Activated naive CD4-positive, alpha-beta T cell treated with anti-CD3 and anti-CD28 coated beads for 36 hours (primary cell): ENCODE measurements at regions of chr1 and their contacts with region 1.

Region 1: DNA sequence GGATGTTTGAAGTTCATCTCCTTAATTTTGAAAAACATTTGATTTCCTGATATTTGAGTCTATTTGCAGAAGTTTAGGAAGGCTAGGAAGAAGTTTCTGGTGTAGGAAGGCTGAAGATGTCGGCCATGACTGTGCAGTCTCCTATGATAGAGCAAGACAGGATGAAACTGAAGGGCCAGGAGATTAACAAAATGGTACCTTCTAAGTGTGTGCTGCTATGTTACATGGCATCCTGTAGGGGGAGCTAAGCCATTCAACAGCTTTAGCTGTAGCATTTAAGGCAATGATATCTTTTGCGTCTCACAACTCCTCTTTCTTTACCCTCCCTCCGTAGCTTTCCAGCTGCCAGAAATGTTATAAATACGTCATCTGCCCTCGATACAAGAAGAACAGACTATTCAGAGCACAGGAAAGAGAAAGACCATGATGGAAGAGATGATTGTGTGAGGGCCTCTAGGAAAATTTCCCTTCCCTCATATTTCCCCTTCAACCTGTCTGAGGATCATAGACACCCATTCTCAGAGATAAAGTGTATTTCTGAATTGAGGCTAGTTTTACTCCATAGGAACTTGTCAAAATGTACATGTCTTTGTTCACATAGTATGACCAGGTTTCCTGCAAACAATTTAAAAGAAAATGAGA is 61.1 kb downstream of the XCL1 start:
- DNase-seq: peak; percentile 10
- H3K4me3 Mint-ChIP-seq: no peak overlapping the region
- H3K27ac Mint-ChIP-seq: no peak overlapping the region
- H3K4me1 Mint-ChIP-seq: no peaks in the 10 kb centered on the region
- H3K27me3 Mint-ChIP-seq: peaks cover under 1% of the 10 kb centered on the region

Region 2: DNA sequence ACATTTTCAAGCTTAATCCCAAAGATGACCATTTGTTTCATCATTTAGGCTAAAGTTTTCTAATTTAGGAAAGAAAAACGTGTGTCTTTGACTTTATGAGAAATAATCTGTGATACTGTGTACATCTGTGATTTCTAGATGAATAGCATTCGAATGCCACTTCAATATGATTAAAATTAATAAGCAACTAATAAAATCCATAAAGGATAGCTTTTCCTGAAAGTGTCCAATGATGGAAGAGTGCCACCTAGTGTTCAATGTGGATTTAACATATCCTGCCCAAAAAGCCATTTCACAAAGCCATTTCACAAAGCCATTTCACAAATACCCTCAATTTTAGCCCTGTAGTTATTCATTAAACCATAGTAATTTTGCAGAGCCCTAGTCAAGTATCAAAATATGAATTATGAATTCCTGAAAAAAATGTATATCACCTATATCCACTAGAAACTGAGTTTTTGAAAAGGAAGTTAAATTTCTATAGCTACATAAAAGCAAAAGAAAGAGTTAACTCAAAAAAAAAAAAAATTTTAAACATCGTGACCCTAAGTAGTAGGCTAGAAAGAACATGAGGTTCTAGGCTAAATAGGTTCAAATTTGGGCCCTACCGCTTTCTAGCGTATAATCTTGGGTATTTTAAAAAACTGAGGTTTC is 711.0 kb after region 1 on chr1:
- CTCF ChIA-PET with region 1: interaction called, 4 read pairs
- intact Hi-C with region 1: loop called (anchors 1 kb)
- DNase-seq: peak; percentile 31
- H3K4me3 Mint-ChIP-seq: no peak overlapping the region
- H3K27ac Mint-ChIP-seq: no peak overlapping the region
- H3K4me1 Mint-ChIP-seq: peaks cover 9% of the 10 kb centered on the region
- H3K27me3 Mint-ChIP-seq: no peaks in the 10 kb centered on the region